CD4-positive, alpha-beta memory T cell (primary cell): ENCODE measurements at regions of chr10 and their contacts with region 1.

Region 1: DNA sequence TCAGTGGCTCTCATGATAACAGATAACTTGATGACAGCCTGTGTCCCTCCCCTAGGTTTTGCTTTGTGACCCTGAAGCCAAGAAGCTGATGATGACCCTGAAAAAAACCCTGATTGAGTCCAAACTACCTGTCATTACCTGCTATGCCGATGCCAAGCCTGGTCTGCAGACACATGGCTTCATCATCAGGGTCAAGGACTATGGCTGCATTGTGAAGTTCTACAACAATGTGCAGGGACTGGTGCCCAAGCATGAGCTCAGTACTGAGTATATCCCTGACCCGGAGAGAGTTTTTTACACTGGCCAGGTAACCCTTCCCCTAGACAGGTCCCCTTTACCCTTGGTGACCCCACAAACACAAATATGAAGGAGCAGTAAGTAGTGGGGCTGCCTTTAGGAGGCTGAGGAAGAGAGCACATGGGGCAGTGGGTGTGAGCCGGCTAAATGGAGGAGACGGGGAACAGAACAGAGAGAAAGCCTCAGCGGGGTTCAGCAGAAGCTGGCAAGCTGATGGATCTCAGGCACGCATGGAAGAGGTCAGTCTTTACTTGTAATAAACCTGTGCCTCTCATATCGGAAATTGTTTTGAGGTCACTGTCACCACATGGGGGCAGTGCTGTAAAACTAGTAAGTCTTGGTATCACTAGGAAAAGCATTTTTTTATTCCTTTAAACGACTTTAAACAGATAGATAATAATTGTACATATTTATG is 20.2 kb downstream of the PDCD11 start:
- DNase-seq: peak; percentile 58 to 67 (median 60)
- H3K4me3 ChIP-seq: no peak overlapping the region
- H3K4me3 Mint-ChIP-seq: no peak overlapping the region
- H3K27ac ChIP-seq: no peak overlapping the region
- H3K27ac Mint-ChIP-seq: peak overlapping the region in 5 of 7 donors; percentile 2 to 80 (median 34)
- H3K4me1 ChIP-seq: no peaks in the 10 kb centered on the region
- H3K4me1 Mint-ChIP-seq: peaks cover 3 to 8% (median 5%) of the 10 kb centered on the region in 4 donors
- H3K27me3 ChIP-seq: no peaks in the 10 kb centered on the region
- H3K27me3 Mint-ChIP-seq: no peaks in the 10 kb centered on the region

Region 2: DNA sequence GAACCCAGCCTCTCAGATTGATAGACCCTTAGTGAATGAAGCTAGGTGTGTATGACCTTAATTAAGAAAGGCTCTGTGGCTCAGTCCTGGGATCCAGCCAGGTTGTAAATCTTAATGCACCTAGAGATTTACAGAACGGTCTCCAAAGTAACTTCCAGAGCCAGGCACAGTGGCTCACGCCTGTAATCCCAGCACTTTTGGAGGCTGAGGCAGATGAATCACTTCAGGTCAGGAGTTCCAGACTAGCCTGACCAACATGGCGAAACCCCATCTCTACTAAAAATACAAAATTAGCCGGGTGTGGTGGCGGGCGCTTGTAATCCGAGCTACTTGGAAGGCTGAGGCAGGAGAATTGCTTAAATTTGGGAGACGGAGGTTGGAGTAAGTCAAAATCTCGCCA is 11.3 kb after region 1 on chr10:
- CTCF ChIA-PET with region 1: interaction called, 25 read pairs
- POLR2A ChIA-PET with region 1: no interaction called
- intact Hi-C with region 1: no loop called
- DNase-seq: no peak
- H3K4me3 ChIP-seq: no peak overlapping the region
- H3K4me3 Mint-ChIP-seq: no peak overlapping the region
- H3K27ac ChIP-seq: no peak overlapping the region
- H3K27ac Mint-ChIP-seq: peak overlapping the region in 1 of 7 donors; percentile 38
- H3K4me1 ChIP-seq: peaks cover 32% of the 10 kb centered on the region
- H3K4me1 Mint-ChIP-seq: peaks cover 21 to 51% (median 36%) of the 10 kb centered on the region in 4 donors
- H3K27me3 ChIP-seq: no peaks in the 10 kb centered on the region
- H3K27me3 Mint-ChIP-seq: no peaks in the 10 kb centered on the region

Region 3: GRCh38 chr10:103451831-103452505 is 35.4 kb after region 1 on chr10 and contains the start of gene CALHM2:
- CTCF ChIA-PET with region 1: interaction called, 75 read pairs
- POLR2A ChIA-PET with region 1: interaction called, 11 read pairs
- intact Hi-C with region 1: no loop called
- DNase-seq: peak in 4 of 5 donors; percentile 40 to 57 (median 44)
- H3K4me3 ChIP-seq: peak within 1 kb of the TSS; percentile 79 to 97
- H3K4me3 Mint-ChIP-seq: peak within 1 kb of the TSS; percentile 90 to 99 (median 96)
- H3K27ac ChIP-seq: peak within 1 kb of the TSS; percentile 72
- H3K27ac Mint-ChIP-seq: peak within 1 kb of the TSS; percentile 81 to 98 (median 95)
- H3K4me1 ChIP-seq: peaks cover 54% of the 10 kb centered on the region
- H3K4me1 Mint-ChIP-seq: peaks cover 42 to 74% (median 51%) of the 10 kb centered on the region in 4 donors
- H3K27me3 ChIP-seq: no peaks in the 10 kb centered on the region
- H3K27me3 Mint-ChIP-seq: no peaks in the 10 kb centered on the region
- total RNA-seq, gene CALHM2: 80.5 to 84.6 TPM

Region 4: DNA sequence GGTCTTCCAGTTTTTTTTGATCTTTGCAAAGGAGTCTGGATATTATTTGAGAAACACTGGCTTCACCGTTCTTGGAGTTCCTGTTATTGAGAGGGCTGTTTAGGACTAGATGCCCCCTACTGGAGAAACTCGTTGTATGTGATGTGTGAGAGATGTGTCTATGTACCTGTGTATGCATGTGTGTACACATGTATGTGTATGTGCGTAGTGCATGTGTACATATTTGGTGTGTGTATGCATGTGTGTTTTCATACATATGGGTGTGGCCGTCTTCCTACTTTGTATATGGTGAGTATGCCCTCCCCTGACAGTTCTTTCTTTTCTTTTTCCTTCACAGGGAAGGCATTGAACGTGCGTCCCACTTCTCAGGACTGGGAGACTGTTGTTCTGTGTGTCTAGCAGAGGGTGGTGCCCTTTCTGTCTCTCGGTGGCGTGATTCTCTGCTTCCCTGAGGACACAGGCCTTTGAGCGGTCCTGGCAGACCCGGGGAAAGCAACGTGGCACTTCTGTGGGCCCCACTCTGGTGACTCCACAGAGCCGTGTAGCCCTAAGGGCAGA is 65.5 kb after region 1 on chr10:
- CTCF ChIA-PET with region 1: interaction called, 268 read pairs
- POLR2A ChIA-PET with region 1: interaction called, 13 read pairs
- intact Hi-C with region 1: loop called (anchors 1 kb)
- DNase-seq: peak; percentile 64 to 71 (median 66)
- H3K4me3 ChIP-seq: no peak overlapping the region
- H3K4me3 Mint-ChIP-seq: no peak overlapping the region
- H3K27ac ChIP-seq: no peak overlapping the region
- H3K27ac Mint-ChIP-seq: peak overlapping the region in 3 of 7 donors; percentile 3 to 79 (median 38)
- H3K4me1 ChIP-seq: no peaks in the 10 kb centered on the region
- H3K4me1 Mint-ChIP-seq: peaks cover 7 to 18% (median 9%) of the 10 kb centered on the region in 4 donors
- H3K27me3 ChIP-seq: no peaks in the 10 kb centered on the region
- H3K27me3 Mint-ChIP-seq: peaks cover 0 to 3% of the 10 kb centered on the region in 2 donors

Region 5: GRCh38 chr10:103491493-103492381 is 75.1 kb after region 1 on chr10:
- CTCF ChIA-PET with region 1: interaction called, 268 read pairs
- POLR2A ChIA-PET with region 1: interaction called, 13 read pairs
- intact Hi-C with region 1: no loop called
- DNase-seq: no peak
- H3K4me3 ChIP-seq: no peak overlapping the region
- H3K4me3 Mint-ChIP-seq: peak overlapping the region in 4 of 8 donors; percentile 1 to 91 (median 42)
- H3K27ac ChIP-seq: no peak overlapping the region
- H3K27ac Mint-ChIP-seq: peak overlapping the region in 1 of 7 donors; percentile 8
- H3K4me1 ChIP-seq: peaks cover 21% of the 10 kb centered on the region
- H3K4me1 Mint-ChIP-seq: peaks cover 6 to 36% (median 20%) of the 10 kb centered on the region in 4 donors
- H3K27me3 ChIP-seq: peaks cover 19% of the 10 kb centered on the region
- H3K27me3 Mint-ChIP-seq: peaks cover 19 to 20% of the 10 kb centered on the region in 2 donors

Region 6: DNA sequence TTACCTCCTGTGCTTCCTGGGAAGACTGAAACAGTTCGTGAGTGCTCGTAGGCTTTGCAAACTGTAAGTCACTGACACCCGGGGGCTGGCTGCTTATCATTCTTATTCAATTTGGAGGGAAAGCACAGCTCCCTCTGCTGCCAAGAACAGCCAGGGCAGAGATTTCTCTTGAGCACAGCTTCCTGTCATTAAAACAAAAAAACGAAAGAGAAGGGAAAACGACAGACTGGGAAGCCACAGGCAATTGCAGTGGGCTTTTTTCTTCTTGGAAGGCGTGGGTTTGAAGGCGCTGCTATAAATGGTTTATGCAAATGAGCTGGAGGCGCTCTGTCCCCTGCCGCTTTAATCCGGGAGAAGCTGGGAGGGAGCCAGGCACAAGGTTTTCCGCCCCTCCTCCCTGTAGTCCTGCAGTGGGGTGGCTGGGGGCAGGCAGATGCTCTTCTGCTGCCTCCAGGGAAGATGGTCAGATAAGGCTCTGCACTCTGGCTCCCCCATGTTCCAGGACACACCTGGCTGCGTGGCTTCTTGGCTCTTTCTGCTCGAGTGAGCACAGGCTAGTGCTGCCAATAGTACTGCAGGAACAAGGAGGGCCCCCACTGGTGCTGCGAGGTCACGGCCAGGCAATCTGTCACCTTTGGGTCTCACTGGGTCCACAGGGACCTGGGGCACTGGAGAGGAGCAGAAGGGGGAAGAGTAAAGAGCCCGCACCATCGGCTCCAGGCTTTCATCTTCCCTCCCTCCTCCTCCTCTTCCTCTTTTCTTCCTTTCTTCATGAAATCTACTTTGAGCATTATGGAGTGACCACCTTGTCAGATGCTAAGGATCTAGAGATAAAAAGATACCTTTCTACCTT is 126.4 kb after region 1 on chr10:
- CTCF ChIA-PET with region 1: interaction called, 4 read pairs
- POLR2A ChIA-PET with region 1: no interaction called
- intact Hi-C with region 1: loop called (anchors 1 kb)
- DNase-seq: peak; percentile 16 to 51 (median 25)
- H3K4me3 ChIP-seq: peak overlapping the region in 1 of 2 donors; percentile 23
- H3K4me3 Mint-ChIP-seq: peak overlapping the region; percentile 75 to 91 (median 85)
- H3K27ac ChIP-seq: no peak overlapping the region
- H3K27ac Mint-ChIP-seq: peak overlapping the region in 3 of 7 donors; percentile 3 to 36 (median 25)
- H3K4me1 ChIP-seq: peaks cover 9% of the 10 kb centered on the region
- H3K4me1 Mint-ChIP-seq: peaks cover 3 to 17% (median 8%) of the 10 kb centered on the region in 4 donors
- H3K27me3 ChIP-seq: peaks cover 5% of the 10 kb centered on the region
- H3K27me3 Mint-ChIP-seq: peaks cover 10 to 11% of the 10 kb centered on the region in 2 donors

Region 7: DNA sequence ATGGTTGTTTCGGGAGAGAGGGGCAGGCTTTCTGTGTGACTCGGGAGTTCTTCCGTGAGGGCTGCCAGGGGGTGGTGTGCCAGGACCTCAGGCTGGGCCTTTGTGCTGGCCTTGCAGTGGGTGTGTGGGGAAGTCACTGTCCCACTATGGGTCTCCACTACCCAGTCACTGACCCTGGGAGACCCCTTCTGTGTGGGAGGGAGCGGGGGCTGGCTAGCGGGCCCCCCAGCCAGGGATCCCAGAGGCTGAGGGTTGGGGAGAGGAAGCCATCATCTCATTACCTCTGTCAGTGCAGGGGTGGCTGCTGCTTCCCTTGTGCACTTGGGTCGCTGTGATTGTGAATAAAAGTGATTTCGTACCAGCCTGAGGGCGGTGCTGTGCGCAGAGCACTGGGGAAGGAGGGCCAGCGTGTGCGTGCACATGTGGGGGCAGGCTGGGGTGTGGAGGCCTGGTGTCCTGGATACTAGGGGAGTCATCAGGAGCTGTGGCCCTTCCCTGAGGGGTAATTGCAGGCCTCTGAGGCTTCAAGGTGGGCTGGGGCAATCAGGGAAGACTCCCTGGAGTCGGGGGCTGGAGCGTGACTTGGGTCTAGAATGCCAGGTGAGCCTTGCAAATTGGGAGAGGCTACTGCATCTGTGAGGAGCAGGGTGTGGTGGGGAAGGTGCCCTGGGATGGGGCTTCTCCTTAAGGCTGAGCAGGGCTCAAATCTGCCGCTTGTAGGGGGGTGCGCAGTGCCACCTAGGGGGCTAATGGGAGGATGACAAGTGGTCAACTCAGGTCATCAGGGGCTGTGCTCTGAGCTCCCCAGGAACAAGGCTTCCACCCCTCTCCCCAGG is 175.8 kb after region 1 on chr10:
- CTCF ChIA-PET with region 1: no interaction called
- POLR2A ChIA-PET with region 1: no interaction called
- intact Hi-C with region 1: loop called (anchors 2 kb)
- DNase-seq: peak in 3 of 5 donors; percentile 11 to 32 (median 19)
- H3K4me3 ChIP-seq: no peak overlapping the region
- H3K4me3 Mint-ChIP-seq: no peak overlapping the region
- H3K27ac ChIP-seq: no peak overlapping the region
- H3K27ac Mint-ChIP-seq: peak overlapping the region in 2 of 7 donors; percentile 46 to 63
- H3K4me1 ChIP-seq: no peaks in the 10 kb centered on the region
- H3K4me1 Mint-ChIP-seq: peaks cover 0 to 1% (median 0%) of the 10 kb centered on the region in 4 donors
- H3K27me3 ChIP-seq: no peaks in the 10 kb centered on the region
- H3K27me3 Mint-ChIP-seq: no peaks in the 10 kb centered on the region